ENCODE measurements at regions of chr3 and their contacts with region 1.

Region 1: DNA sequence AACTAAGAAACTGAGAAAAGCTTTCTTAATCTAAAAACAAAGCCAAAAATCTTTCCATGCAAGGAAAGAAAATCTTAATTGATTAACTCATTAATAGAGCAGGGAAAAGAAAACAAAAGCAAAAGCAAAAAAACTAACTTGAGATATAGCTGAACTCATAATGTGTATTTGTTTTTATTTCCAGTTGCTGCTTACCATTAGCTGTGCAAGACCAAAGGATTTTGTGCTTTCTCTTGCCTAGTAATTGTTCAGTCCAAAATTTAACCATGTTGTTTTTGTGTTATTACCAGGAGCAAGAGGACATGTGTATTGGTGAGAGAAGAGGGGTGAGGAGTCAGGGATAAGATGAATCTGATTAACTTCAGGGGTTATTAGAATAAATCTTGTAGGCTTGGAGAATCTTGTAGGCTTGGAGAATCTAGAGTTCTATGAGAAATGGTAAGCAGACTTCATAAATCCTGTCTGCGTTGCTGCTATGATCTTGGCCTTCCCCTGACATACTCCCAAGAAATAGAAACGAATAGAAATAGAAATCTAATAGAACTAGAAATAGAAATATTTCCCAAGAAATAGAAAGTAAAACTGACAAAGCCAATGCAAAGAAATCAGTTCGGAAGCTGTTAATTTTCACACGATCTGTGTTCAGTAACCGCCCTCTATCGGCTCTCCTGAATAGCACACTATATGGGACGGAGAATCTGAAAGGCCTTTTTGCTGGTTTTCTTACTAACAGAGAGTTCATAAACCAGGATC is 72.6 kb upstream of the TNFSF10 start:
- DNase-seq: peak; percentile 71
- CTCF ChIP-seq: peak; percentile 85

Region 2: DNA sequence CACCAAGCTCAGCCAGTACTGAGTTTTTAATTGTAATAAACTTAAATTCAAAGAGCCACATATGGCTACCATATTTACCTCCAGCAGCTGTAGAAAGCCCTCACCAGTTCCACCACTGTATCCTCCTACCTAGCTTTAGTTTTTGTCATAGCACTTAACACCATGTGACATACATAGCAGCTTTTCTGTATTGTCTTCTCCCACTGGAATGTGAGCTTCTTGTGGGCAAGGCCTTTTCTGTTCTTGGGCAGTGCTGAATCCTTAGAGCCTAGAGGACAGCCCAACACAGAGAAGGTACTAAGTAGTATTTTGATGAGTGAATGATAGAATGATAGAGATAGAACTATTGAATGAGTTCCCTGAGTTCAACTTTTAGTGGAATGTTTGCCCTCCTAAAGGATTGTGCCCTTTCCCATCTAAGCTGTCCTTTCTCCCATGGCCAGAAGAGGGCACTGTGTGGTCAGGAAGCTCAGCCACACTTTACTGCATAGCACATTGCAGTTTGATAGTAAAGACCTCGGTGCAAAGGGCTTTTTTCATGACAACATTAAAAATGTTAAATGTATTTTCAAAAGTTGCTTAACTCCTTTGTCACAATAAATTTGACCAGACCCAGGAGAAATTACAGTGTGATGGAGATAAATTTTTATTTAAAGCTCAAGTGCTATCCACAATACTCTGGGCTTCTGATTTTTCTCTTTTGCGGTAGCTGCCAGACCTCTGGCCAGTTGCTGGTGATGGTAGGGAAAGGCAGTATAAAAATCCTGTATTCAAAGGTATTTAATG is 263.4 kb before region 1 on chr3:
- CTCF ChIA-PET with region 1: interaction called, 16 read pairs
- POLR2A ChIA-PET with region 1: no interaction called
- DNase-seq: peak; percentile 67
- CTCF ChIP-seq: peak; percentile 91

Region 3: GRCh38 chr3:172476347-172476746 is 119.5 kb before region 1 on chr3:
- CTCF ChIA-PET with region 1: interaction called, 21 read pairs
- POLR2A ChIA-PET with region 1: no interaction called
- DNase-seq: no peak
- CTCF ChIP-seq: no peak

Region 4: GRCh38 chr3:172511783-172512762 is 83.7 kb before region 1 on chr3:
- CTCF ChIA-PET with region 1: interaction called, 18 read pairs
- POLR2A ChIA-PET with region 1: no interaction called
- DNase-seq: peak; percentile 25
- CTCF ChIP-seq: no peak

Region 5: GRCh38 chr3:172530566-172530965 is 65.3 kb before region 1 on chr3:
- CTCF ChIA-PET with region 1: interaction called, 21 read pairs
- POLR2A ChIA-PET with region 1: no interaction called
- DNase-seq: no peak
- CTCF ChIP-seq: no peak

Region 6: GRCh38 chr3:172607305-172608121 is 11.7 kb after region 1 on chr3:
- CTCF ChIA-PET with region 1: interaction called, 66 read pairs
- POLR2A ChIA-PET with region 1: no interaction called
- DNase-seq: no peak
- CTCF ChIP-seq: no peak

Region 7: DNA sequence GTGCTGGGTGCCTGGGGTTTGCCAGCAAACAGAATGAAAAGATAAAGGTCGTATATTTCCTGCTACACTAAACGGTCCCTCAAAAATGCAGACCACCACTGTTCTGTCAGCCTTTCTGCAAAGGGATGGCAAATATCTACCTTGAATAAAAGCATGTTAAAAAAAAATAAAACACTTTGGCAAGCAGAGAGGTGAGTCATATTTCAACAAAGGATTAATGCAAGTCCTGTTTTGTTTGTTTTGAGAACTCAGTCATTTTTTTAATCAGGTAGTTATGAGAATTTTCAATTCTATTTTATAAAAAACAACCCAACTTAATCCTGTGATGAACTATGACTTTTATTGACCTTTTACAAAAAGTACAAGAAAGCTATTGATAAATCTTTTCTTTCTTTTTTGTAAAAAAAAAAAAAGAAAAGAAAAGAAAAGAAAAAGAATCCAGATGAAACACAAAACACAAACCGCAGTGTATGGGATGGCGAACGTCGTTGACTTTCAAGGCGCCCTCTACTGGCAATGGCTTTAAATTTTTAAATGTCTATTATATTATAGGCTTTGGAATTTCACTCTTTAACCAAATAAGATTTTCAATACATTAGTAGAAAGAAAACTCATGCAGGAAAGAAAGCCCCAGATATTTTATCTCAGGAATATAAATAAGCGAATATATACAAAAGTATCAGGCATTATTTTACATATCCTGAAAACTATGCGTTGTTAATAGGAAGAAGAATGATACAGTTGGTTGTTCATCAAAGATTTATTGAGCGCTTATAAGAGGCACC is 27.3 kb after region 1 on chr3:
- CTCF ChIA-PET with region 1: interaction called, 29 read pairs
- POLR2A ChIA-PET with region 1: no interaction called
- DNase-seq: peak; percentile 41
- CTCF ChIP-seq: peak; percentile 42

Measured in GM10248 (cell line).